ENCODE measurements at regions of chr6 and their contacts with region 1.

Region 1: DNA sequence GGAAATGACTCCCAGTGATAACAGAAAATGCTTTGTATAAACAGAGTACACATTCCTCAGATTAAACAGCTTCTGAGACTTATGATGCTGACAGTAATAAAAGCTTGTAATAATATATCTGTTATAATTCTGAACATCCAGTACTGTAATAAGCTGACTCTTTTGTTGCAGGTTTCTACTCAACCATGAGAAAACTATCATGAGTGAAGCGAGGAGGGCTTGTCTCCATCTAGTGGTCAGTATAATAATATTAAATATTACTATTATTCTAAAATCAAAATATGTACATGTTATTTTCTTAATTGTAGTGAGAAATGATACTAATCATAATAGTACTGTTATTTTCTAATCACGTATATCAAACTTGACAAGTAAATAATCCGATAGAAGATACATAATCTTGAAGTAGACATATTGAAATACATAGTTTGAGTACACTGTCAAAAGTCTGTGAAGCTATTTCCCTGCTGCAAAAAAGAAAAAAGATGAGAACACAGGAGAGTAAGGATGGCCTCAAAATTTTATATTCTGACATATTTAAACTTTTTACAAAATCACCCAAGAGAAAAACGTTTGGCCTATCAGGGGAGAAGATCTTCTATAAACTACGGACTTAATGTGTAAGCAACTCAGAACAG is 183.1 kb downstream of the MOXD1 start:
- DNase-seq: peak; percentile 3
- ATAC-seq: no peak
- H3K4me3 ChIP-seq: no peak overlapping the region
- H3K27ac ChIP-seq: no peak overlapping the region
- H3K4me1 ChIP-seq: no peaks in the 10 kb centered on the region
- H3K27me3 ChIP-seq: no peaks in the 10 kb centered on the region
- CTCF ChIP-seq: peak; percentile 36 to 72 (median 47); a peak in 5 of 6 replicates
- POLR2A ChIP-seq: no peak
- RAD21 ChIP-seq: peak; percentile 65

Region 2: DNA sequence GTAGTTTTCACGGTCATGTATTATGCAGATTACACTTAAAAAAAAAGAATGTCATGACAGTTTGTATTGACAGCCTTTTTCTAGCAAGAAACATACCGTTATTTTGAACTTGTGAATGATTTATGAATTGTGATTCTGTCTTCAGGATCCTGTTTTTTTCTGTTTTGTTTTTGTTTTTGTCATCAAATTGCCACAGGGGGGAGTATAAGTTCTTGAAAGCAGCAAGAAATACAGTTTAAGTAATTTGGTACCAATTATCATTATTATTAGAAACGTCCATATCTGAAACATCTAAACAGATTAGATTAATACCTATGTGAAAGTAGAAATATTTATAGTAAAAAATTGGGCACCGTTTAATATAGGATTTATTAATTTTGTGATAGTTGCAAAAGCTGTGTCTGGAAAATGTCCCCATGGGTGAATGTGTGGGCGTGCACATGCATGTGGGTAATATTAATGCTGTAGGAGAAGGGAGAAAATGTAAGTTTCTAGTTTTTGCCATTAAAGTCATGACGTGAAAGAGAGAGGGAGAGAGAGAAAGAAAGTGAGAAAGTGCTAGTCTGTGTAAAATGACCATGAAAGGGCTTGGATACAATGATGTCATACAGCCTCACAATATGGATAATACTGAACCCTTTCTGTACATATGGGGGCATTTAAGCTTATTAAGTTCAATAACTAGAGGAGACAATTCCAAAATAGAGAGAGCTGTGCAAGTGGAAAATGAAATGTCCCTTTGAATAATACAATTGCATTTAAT is 257.6 kb before region 1 on chr6:
- CTCF ChIA-PET with region 1: interaction called, 10 read pairs
- POLR2A ChIA-PET with region 1: no interaction called
- RAD21 ChIA-PET with region 1: no interaction called
- intact Hi-C with region 1: loop called (anchors 2 kb)
- DNase-seq: no peak
- ATAC-seq: no peak
- H3K4me3 ChIP-seq: no peak overlapping the region
- H3K27ac ChIP-seq: no peak overlapping the region
- H3K4me1 ChIP-seq: no peaks in the 10 kb centered on the region
- H3K27me3 ChIP-seq: no peaks in the 10 kb centered on the region
- CTCF ChIP-seq: peak; percentile 13 to 58 (median 33); a peak in 4 of 6 replicates
- POLR2A ChIP-seq: no peak
- RAD21 ChIP-seq: peak; percentile 61